ENCODE measurements at regions of chr1 and their contacts with region 1.

Region 1: DNA sequence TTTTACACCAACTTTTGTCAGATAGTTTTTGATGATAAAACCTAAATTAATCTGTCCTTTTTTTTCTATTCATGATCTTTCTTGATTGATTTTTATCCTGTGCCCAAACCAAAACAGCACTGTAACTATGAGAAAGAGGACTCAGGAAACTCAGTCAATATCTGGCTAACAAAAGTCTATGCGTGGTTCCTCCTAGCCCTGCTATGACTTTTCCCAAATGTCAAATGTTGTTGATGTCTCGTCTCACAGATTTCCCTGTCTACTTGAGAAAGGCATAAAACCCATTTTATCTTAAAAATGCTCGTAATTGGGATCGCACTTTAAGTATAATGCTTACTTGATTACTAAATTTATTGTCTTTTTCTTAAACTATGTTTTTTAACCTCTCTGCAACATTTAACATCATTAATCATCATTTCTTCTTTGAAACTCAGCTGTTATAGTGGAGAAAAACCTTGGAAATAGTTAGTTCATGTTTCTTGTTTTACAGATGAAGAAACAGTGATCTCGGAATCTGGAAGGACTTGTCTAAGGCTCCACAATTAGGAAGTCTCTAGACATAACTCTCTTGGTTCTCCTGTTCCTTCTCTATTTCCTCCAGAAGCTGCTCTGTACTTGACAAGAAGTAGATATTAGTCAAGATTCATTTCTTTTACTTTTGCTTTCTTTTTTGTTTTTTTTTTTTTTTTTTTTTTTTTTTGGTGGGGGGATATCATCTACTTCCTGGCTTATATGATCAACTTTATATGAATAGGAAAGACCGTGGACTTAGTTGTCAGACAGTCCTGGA is 26.2 kb upstream of the PTPRC start:
- DNase-seq: no peak
- H3K4me3 Mint-ChIP-seq: peak overlapping the region; percentile 75
- H3K27ac Mint-ChIP-seq: peak overlapping the region; percentile 86
- H3K4me1 Mint-ChIP-seq: peaks cover 59% of the 10 kb centered on the region
- H3K27me3 Mint-ChIP-seq: no peaks in the 10 kb centered on the region

Region 2: DNA sequence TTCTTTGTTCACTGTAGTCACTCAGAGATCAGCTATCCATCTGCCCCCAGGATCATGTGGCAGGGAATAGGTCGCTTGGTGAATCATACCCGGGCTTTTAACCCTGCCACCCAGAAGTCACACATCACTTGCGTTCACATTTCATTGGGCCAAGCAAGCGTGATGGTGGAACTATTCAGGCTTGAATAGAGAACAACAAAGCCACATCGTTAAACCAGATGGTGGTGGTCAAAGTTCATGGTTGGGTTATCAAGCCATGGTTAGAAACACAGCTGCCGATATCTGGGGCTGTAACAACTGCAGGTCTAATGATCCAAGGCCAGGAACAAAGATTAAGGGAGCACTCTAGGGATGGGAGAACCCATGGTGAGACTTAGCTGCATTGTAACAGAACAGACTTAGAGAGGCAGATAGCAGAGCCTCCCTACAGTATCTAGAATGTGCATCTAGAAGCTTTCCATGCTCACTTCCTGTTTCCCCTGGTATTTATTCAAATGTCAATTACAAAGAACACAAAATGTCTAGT is 13.8 kb before region 1 on chr1:
- intact Hi-C with region 1: loop called (anchors 1 kb)
- DNase-seq: no peak
- H3K4me3 Mint-ChIP-seq: no peak overlapping the region
- H3K27ac Mint-ChIP-seq: peak overlapping the region; percentile 77
- H3K4me1 Mint-ChIP-seq: peaks cover 62% of the 10 kb centered on the region
- H3K27me3 Mint-ChIP-seq: no peaks in the 10 kb centered on the region

Measured in activated T-helper 2 cell treated with anti-CD3 and anti-CD28 coated beads, Interferon-gamma antibody, Interleukin-2, Interleukin-4, amounts not matched to agents 10 μg/mL and 5 μg/mL and 100 μg/mL, durations not matched to agents 14 hours and 24 hours and 36 hours (primary cell).